Heart left ventricle (tissue), 16 donors: ENCODE measurements at regions of chr1 and their contacts with region 1.

Region 1: GRCh38 chr1:225652729-225653462 is at the start of gene ENAH:
- DNase-seq: peak; percentile 88 to 91 (median 89)
- ATAC-seq: peak; percentile 68 to 93 (median 87)
- H3K4me3 ChIP-seq: peak within 1 kb of the TSS; percentile 80 to 99 (median 92)
- H3K27ac ChIP-seq: peak within 1 kb of the TSS; percentile 92 to 100 (median 96)
- H3K4me1 ChIP-seq: peaks cover 0 to 65% (median 37%) of the 10 kb centered on the region in 12 donors
- H3K27me3 ChIP-seq: peaks cover 0 to 6% (median 0%) of the 10 kb centered on the region in 9 donors
- CTCF ChIP-seq: no peak
- POLR2A ChIP-seq: peak; percentile 28 to 54
- total RNA-seq, gene ENAH: 54.3 to 183 (median 97.6) TPM

Region 2: DNA sequence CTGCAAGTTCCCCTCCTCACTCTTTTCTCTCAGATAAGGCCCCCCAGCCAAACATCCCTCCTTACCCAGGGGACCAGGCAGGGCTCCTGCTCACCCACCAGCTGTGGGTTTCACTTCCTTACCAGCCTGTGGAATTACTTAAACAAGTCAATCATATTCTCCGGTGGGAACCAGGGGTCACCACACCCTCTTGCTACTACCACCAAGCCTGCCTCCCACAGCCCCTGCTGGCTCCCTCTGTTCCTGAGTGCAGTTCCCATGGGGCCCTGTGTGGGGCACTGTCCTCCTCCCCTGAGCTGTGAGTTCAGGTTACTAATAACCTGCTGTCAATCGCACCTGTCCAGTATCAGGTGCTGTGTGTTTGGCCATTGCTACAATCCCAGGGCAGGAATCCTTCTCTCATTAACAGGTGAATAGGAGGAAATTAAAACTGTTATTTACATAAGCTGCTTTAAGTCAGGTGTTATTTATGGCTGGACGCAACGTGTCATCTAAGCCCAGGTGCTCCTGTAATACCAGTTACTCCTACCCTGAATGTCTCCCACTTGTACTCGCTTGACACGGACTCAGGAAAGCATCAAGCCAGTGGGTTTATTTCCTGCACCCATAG is 172.0 kb before region 1 on chr1:
- intact Hi-C with region 1: loop called in 6 of 10 experiments (anchors 5 to 10 kb)
- DNase-seq: no peak
- ATAC-seq: peak in 3 of 4 donors; percentile 43 to 63 (median 50)
- H3K4me3 ChIP-seq: no peak overlapping the region
- H3K27ac ChIP-seq: no peak overlapping the region
- H3K4me1 ChIP-seq: peaks cover 0 to 9% (median 0%) of the 10 kb centered on the region in 12 donors
- H3K27me3 ChIP-seq: no peaks in the 10 kb centered on the region
- CTCF ChIP-seq: peak; percentile 42 to 71 (median 60)
- POLR2A ChIP-seq: no peak

Region 3: GRCh38 chr1:225559326-225559725 is 93.6 kb before region 1 on chr1:
- intact Hi-C with region 1: loop called in 2 of 10 experiments (anchors 5 to 10 kb)
- DNase-seq: no peak
- ATAC-seq: no peak
- H3K4me3 ChIP-seq: no peak overlapping the region
- H3K27ac ChIP-seq: no peak overlapping the region
- H3K4me1 ChIP-seq: peaks cover 0 to 4% (median 0%) of the 10 kb centered on the region in 12 donors
- H3K27me3 ChIP-seq: no peaks in the 10 kb centered on the region
- CTCF ChIP-seq: no peak
- POLR2A ChIP-seq: no peak

Region 4: DNA sequence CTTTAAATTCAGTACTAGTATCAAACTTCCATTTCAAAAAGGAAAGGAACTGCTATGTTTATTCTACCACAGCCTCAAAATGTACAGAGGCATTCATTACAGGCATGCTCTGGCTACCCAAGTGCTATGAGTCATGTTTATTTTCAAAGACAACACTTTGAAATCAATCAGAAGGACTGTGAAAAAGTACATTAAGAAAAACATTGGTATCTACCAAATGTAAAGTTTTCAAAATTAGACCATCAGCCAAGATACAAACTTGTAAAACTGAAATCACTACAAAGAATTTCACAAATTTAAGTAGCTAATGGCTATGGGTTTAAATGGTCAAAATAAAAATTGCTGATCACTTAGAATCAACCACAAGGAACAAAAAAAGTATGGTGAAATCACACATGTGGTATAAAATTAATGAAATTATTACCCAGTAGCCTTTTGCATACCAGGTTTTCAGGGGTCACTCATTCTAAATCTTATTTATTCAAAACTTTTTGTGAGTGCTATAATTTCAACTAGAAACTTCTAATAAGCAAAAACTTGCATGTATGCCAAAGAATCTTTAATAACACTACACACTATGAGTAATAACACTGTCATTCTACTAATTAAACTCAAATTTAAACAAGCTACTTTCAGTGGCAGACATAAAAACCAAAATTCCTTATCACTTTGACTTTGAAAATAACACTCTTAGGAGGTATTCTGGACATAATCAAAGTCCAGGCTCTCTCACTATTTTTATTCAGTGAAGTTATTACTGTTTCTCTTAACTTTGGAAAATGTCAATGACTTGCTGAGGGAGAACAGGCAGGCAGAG is 49.1 kb before region 1 on chr1:
- intact Hi-C with region 1: loop called in 1 of 10 experiments (anchors 5 kb)
- DNase-seq: no peak
- ATAC-seq: peak in 3 of 4 donors; percentile 50 to 60 (median 57)
- H3K4me3 ChIP-seq: peak overlapping the region in 1 of 12 donors; percentile 12
- H3K27ac ChIP-seq: peak overlapping the region in 11 of 12 donors; percentile 21 to 71 (median 43)
- H3K4me1 ChIP-seq: peaks cover 0 to 61% (median 28%) of the 10 kb centered on the region in 12 donors
- H3K27me3 ChIP-seq: no peaks in the 10 kb centered on the region
- CTCF ChIP-seq: no peak
- POLR2A ChIP-seq: no peak

Region 5: DNA sequence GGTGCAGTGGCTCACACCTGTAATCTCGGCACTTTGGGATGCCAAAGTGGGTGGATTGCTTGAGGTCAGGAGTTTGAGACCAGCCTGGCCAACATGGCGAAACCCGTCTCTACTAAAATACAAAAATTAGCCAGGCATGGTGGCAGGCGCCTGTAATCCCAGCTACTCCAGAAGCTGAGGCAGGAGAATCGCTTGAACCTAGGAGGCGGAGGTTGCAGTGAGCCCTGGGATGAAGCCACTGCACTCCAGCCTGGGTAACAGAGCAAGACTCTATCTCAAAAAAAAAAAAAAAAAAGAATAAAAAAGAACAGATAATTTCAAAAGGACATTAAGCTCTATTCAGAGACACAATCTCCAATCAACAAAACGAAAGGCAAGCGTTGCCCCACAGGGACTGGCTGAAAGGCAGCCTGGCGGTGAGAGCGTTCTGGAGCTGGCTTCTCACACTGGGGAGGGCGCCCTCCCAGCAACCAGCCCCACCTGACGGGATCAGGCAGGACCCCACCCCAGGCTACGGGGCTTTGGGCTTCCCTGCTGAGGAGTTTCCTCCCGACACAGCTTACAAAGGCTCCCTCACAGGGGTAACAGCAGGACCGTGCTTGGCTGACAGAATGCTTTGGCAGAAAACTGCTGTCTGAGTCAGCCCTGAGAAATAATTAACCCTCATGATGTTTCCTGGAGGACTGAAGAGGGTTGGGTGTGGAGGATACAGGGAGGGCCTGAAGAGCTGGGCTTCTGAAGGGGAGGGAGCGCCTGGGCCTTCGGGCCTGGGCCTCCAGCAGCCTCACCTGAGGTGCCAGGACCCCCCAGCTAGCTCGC is 93.7 kb after region 1 on chr1:
- intact Hi-C with region 1: loop called in 2 of 10 experiments (anchors 5 kb)
- DNase-seq: peak; percentile 78 to 85 (median 83)
- ATAC-seq: peak; percentile 91 to 98 (median 97)
- H3K4me3 ChIP-seq: peak overlapping the region in 11 of 12 donors; percentile 3 to 60 (median 48)
- H3K27ac ChIP-seq: peak overlapping the region; percentile 78 to 96 (median 88)
- H3K4me1 ChIP-seq: peaks cover 2 to 48% (median 27%) of the 10 kb centered on the region in 12 donors
- H3K27me3 ChIP-seq: no peaks in the 10 kb centered on the region
- CTCF ChIP-seq: peak in 6 of 12 donors; percentile 13 to 33 (median 28)
- POLR2A ChIP-seq: no peak

Region 6: GRCh38 chr1:225772323-225772768 is 119.5 kb after region 1 on chr1:
- intact Hi-C with region 1: loop called in 9 of 10 experiments (anchors 2 to 5 kb)
- DNase-seq: peak; percentile 81 to 90 (median 84)
- ATAC-seq: peak; percentile 81 to 90 (median 88)
- H3K4me3 ChIP-seq: no peak overlapping the region
- H3K27ac ChIP-seq: peak overlapping the region in 9 of 12 donors; percentile 2 to 75 (median 44)
- H3K4me1 ChIP-seq: peaks cover under 1 to 70% (median 40%) of the 10 kb centered on the region in 12 donors
- H3K27me3 ChIP-seq: no peaks in the 10 kb centered on the region
- CTCF ChIP-seq: peak; percentile 76 to 94 (median 90)
- POLR2A ChIP-seq: no peak